Right ventricle myocardium inferior (tissue), 1 donor: ENCODE measurements at regions of chr16 and their contacts with region 1.

Region 1: DNA sequence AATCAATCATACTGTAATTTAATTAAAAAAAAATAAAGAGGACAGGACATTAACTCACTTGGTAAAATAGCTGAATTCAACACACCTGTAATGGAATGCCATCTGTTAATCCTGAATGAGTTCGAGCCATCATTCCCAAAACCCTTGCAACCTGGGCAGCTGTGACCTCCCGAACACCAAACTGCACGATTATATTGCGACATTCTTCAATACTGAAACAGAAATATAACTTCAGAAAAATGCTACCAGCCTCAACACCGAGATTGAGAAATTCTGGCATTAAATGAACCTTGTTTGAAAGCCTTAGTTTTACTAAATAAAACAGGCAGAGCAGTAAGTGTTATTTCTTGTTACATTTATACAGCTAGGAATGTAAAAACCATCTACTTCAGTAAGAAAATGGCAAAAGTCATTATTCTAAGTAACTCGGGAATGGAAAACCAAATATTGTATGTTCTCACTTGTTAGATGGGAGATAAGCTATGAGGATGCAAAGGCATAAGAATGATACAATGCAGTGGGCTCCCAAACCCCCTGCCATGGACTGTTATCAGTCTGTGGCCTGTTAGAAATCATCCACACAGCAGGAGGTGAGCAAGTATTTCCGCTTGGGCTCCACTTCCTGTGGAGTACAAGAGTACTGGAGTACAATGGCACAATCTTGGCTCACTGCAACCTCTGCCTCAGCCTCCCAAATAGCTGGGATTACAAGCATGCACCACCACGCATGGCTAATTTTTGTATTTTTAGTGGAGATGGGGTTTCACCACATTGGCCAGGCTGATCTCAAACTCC is 46.5 kb downstream of the CNOT1 start:
- DNase-seq: no peak
- ATAC-seq: no peak

Region 2: GRCh38 chr16:58515125-58515870 is 67.9 kb before region 1 on chr16 and contains the start of gene SETD6:
- intact Hi-C with region 1: loop called (anchors 10 kb)
- DNase-seq: peak; percentile 93
- ATAC-seq: peak; percentile 96
- total RNA-seq, gene SETD6: 13.0 TPM

Region 3: GRCh38 chr16:58605562-58605961 is 22.4 kb after region 1 on chr16:
- intact Hi-C with region 1: no loop called
- DNase-seq: no peak
- ATAC-seq: no peak